ENCODE measurements at regions of chr20 and their contacts with region 1.

Region 1: DNA sequence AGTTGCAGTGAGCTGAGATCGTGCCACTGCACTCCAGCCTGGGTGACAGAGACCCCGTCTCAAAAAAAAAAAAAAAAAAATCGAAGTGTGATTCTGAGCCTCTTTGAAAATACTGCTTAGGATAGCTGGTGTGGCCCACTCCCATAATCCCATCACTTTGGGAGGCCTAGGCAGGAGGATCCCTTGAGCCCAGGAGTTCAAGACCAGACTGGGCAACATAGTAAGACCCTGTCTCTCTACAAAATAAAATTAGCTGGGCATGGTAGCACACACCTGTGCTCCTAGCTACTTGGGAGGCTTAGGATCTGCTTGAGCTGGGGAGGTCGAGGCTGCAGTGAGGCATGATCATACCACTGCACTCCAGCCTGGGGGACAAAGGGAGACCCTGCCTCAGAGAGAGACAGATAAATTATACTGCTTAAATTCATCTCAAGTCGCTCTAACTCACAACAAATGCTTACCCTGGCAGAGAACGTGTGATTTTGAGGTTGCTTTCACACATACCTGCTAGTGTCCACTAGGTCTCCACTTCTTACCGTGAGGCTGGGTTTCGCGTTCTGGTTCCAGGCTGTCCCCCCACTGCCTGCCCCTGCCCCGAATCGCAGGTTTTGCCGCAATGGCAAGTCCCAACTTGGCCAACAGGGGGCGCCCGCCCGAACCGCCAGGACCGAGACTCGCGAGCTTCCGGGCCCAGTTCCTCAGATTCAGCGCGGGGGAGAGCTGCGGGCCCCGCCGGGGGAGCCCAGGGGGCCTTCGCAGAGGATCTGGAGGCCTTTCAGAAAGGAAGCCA is 12.3 kb upstream of the TMC2 start:
- DNase-seq: peak; percentile 93 to 98
- ATAC-seq: peak; percentile 92
- H3K4me3 ChIP-seq: peak overlapping the region; percentile 86 to 87
- H3K27ac ChIP-seq: peak overlapping the region; percentile 23 to 96
- H3K4me1 ChIP-seq: no peaks in the 10 kb centered on the region
- H3K27me3 ChIP-seq: no peaks in the 10 kb centered on the region

Region 2: DNA sequence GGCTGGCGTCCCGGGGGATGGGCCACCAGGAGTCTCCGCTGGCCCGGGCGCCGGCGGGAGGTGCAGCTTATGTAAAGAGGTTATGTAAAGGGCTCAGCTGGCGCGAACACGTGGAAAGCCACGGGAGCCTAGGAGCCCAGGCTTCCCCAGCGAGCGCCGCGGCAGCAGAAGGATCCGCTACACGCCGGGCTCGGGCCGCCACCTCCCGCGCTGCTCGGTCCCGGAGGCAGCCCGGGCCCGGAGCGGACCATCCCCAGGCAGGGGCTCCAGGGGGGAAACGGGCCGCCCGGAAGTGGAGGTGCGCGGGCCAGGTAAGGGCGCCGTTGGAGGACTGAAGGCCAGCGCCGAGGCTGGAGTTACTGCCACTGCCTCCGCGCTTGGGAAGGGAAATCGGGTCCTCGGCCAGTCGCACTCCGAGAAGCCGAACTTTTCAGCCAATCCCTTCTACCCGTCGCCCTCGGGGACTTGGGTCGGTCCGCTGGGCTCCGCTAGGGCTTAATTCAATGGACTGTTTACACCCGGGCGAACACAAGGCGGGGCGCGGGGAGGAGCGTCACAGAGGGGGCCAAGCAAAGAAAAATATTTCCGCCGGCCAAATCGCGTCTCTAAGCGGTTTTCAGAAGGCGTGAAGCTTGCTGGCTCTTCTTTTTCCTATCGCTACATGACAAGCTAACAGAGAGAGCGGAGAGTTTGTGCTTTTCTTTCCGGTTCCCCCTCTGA is 422.1 kb before region 1 on chr20:
- intact Hi-C with region 1: loop called in 1 of 2 experiments (anchors 10 kb)
- DNase-seq: peak; percentile 95 to 97
- ATAC-seq: peak; percentile 97
- H3K4me3 ChIP-seq: peak overlapping the region; percentile 52 to 67
- H3K27ac ChIP-seq: peak overlapping the region; percentile 58 to 92
- H3K4me1 ChIP-seq: peaks cover 2 to 12% of the 10 kb centered on the region in 2 donors
- H3K27me3 ChIP-seq: no peaks in the 10 kb centered on the region

Region 3: GRCh38 chr20:2619961-2620595 is 96.0 kb after region 1 on chr20:
- intact Hi-C with region 1: no loop called
- DNase-seq: no peak
- ATAC-seq: no peak
- H3K4me3 ChIP-seq: no peak overlapping the region
- H3K27ac ChIP-seq: no peak overlapping the region
- H3K4me1 ChIP-seq: no peaks in the 10 kb centered on the region
- H3K27me3 ChIP-seq: no peaks in the 10 kb centered on the region

Region 4: GRCh38 chr20:2643708-2644107 is 119.6 kb after region 1 on chr20:
- intact Hi-C with region 1: loop called in 1 of 2 experiments (anchors 10 kb)
- DNase-seq: no peak
- ATAC-seq: no peak
- H3K4me3 ChIP-seq: no peak overlapping the region
- H3K27ac ChIP-seq: no peak overlapping the region
- H3K4me1 ChIP-seq: no peaks in the 10 kb centered on the region
- H3K27me3 ChIP-seq: no peaks in the 10 kb centered on the region

Region 5: DNA sequence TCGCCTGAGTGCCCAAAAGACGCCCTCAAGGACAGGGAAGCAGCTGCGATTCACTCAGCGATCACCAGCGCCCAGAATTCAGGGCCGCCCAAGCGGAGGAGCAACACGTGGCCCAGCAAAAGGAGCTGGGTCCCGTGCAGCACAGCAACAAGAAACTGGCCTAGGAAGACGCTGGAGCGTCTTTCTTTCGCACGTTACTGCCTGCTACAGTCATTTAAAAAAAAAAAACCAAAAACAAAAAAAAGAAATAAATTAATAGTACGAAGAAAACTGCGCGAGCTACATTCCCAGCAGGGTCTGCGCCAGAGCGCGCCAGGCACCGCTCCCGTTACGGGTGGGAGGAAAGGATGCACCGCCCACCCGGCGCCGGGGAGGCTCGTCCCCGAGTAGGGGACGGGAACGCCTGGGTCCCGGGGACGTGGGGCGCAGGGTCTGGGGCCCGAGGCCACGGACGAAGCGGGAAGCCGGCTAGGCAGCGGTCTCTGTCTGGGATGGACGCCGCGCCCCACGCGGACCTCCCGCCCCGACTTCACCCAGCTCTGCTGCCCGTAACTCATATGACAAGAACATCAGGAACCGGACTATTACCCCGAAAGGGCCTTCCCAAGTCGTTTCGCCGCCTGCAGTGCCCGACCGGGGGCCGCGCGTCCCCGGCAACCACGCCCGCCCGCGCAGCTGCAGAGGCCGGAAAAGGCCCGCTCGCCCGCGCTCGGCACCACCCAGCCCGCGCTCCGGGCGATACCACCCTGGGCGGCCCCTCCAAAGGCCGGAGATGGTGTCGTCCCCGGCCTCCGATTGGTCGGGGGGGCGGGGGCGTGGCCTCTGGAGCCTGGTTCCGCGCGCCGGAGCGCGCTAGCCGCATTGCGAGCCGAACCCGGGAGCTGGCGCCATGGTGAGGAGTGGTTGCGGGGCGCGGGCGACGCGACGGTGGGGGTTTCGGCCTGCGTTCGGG is 127.9 kb after region 1 on chr20 and contains the start of gene NOP56:
- intact Hi-C with region 1: loop called (anchors 5 to 10 kb)
- DNase-seq: peak; percentile 94 to 96
- ATAC-seq: peak; percentile 98
- H3K4me3 ChIP-seq: peak within 1 kb of the TSS; percentile 88 to 91
- H3K27ac ChIP-seq: peak within 1 kb of the TSS; percentile 91 to 92
- H3K4me1 ChIP-seq: no peaks in the 10 kb centered on the region
- H3K27me3 ChIP-seq: peaks cover 0 to 2% of the 10 kb centered on the region in 2 donors
- total RNA-seq, gene NOP56: 81.6 to 88.3 TPM

Region 6: GRCh38 chr20:2838170-2838797 is 314.2 kb after region 1 on chr20:
- intact Hi-C with region 1: loop called in 1 of 2 experiments (anchors 10 kb)
- DNase-seq: no peak
- ATAC-seq: no peak
- H3K4me3 ChIP-seq: no peak overlapping the region
- H3K27ac ChIP-seq: no peak overlapping the region
- H3K4me1 ChIP-seq: no peaks in the 10 kb centered on the region
- H3K27me3 ChIP-seq: no peaks in the 10 kb centered on the region